PC-9 (cell line): ENCODE measurements at regions of chr3 and their contacts with region 1.

Region 1: DNA sequence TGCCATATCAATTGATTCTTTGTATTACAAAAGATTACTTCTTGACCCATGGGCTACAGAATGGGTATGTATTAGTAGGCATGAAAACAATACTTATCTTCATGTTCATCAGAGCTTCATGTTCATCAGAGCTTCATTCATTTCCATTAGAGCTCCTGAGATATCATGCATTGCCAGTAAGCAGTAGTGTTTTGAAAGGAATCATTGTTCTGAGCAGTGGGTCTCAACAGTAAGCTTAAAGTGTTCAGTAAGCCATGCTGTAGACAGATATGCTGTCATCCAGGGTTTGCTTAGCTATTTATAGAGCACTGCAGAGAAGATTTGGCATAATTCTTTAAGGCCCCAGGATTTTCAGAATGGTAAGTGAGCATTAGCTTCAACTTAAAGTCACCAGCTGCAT is 596.1 kb downstream of the ZNF385D start:
- DNase-seq: no peak
- H3K4me3 ChIP-seq: no peak overlapping the region
- H3K27ac ChIP-seq: no peak overlapping the region
- H3K4me1 ChIP-seq: no peaks in the 10 kb centered on the region
- H3K27me3 ChIP-seq: no peaks in the 10 kb centered on the region
- CTCF ChIP-seq: no peak

Region 2: GRCh38 chr3:20537234-20537633 is 617.7 kb before region 1 on chr3:
- CTCF ChIA-PET with region 1: no interaction called
- POLR2A ChIA-PET with region 1: no interaction called
- intact Hi-C with region 1: no loop called
- DNase-seq: no peak
- H3K4me3 ChIP-seq: no peak overlapping the region
- H3K27ac ChIP-seq: no peak overlapping the region
- H3K4me1 ChIP-seq: no peaks in the 10 kb centered on the region
- H3K27me3 ChIP-seq: no peaks in the 10 kb centered on the region
- CTCF ChIP-seq: no peak

Region 3: GRCh38 chr3:21142949-21143348 is 12.0 kb before region 1 on chr3:
- CTCF ChIA-PET with region 1: no interaction called
- POLR2A ChIA-PET with region 1: interaction called, 11 read pairs
- intact Hi-C with region 1: no loop called
- DNase-seq: no peak
- H3K4me3 ChIP-seq: no peak overlapping the region
- H3K27ac ChIP-seq: no peak overlapping the region
- H3K4me1 ChIP-seq: no peaks in the 10 kb centered on the region
- H3K27me3 ChIP-seq: no peaks in the 10 kb centered on the region
- CTCF ChIP-seq: no peak

Region 4: GRCh38 chr3:21405671-21406667 is 251.1 kb after region 1 on chr3:
- CTCF ChIA-PET with region 1: no interaction called
- POLR2A ChIA-PET with region 1: no interaction called
- intact Hi-C with region 1: no loop called
- DNase-seq: no peak
- H3K4me3 ChIP-seq: no peak overlapping the region
- H3K27ac ChIP-seq: no peak overlapping the region
- H3K4me1 ChIP-seq: no peaks in the 10 kb centered on the region
- H3K27me3 ChIP-seq: no peaks in the 10 kb centered on the region
- CTCF ChIP-seq: no peak